ENCODE measurements at regions of chr10 and their contacts with region 1.

Region 1: DNA sequence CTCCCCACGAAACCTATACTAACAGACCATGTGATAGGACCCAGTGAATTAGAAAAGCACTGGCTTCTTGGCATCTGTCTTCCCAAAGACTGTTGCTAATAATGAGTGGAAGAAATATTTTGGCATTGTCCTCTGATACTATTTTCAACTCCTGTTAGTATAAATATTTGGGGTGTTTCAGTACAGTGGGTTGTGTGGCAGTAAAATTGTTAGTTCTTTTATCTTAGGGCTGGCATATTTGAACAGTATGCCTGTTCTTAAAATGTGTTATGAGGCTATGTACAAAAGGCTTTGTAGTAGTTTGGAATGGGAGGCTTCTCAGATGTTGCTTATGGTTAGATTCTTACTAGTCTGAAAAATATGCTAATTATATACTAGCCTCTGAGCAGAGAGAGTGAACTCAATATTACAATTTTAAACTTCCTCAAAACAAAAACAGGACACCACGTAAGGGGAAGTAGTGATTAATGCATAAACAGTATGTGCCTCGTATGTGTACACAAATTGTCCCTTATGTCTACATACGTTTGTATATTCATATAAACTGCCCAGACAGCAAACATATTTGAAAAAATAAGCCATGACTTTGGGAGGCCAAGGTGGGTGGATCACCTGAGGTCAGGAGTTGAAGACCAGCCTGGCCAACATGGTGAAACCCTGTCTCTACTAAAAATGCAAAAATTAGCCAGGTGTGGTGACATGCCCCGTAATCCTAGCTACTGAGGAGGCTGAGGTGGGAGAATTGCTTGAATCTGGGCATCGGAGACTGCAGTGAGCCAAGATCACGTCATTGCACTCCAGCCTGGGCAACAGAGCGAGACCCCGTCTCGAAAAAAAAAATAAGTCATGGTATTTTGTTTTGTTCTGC is 115.4 kb downstream of the ARID5B start:
- DNase-seq: no peak
- ATAC-seq: peak; percentile 82
- H3K4me3 ChIP-seq: no peak overlapping the region
- H3K4me3 Mint-ChIP-seq: no peak overlapping the region
- H3K27ac ChIP-seq: no peak overlapping the region
- H3K27ac Mint-ChIP-seq: peak overlapping the region in 4 of 9 donors; percentile 19 to 66 (median 48)
- H3K4me1 ChIP-seq: no peaks in the 10 kb centered on the region
- H3K4me1 Mint-ChIP-seq: peaks cover 14 to 53% (median 41%) of the 10 kb centered on the region in 7 donors
- H3K27me3 ChIP-seq: no peaks in the 10 kb centered on the region
- H3K27me3 Mint-ChIP-seq: no peaks in the 10 kb centered on the region

Region 2: GRCh38 chr10:62001898-62002297 is 15.0 kb before region 1 on chr10:
- CTCF ChIA-PET with region 1: no interaction called
- POLR2A ChIA-PET with region 1: no interaction called
- intact Hi-C with region 1: loop called in 1 of 2 experiments (anchors 2 kb)
- DNase-seq: no peak
- ATAC-seq: no peak
- H3K4me3 ChIP-seq: no peak overlapping the region
- H3K4me3 Mint-ChIP-seq: peak overlapping the region in 1 of 10 donors; percentile 52
- H3K27ac ChIP-seq: no peak overlapping the region
- H3K27ac Mint-ChIP-seq: peak overlapping the region in 3 of 9 donors; percentile 10 to 53 (median 15)
- H3K4me1 ChIP-seq: no peaks in the 10 kb centered on the region
- H3K4me1 Mint-ChIP-seq: peaks cover 24 to 72% (median 51%) of the 10 kb centered on the region in 7 donors
- H3K27me3 ChIP-seq: no peaks in the 10 kb centered on the region
- H3K27me3 Mint-ChIP-seq: no peaks in the 10 kb centered on the region

Region 3: DNA sequence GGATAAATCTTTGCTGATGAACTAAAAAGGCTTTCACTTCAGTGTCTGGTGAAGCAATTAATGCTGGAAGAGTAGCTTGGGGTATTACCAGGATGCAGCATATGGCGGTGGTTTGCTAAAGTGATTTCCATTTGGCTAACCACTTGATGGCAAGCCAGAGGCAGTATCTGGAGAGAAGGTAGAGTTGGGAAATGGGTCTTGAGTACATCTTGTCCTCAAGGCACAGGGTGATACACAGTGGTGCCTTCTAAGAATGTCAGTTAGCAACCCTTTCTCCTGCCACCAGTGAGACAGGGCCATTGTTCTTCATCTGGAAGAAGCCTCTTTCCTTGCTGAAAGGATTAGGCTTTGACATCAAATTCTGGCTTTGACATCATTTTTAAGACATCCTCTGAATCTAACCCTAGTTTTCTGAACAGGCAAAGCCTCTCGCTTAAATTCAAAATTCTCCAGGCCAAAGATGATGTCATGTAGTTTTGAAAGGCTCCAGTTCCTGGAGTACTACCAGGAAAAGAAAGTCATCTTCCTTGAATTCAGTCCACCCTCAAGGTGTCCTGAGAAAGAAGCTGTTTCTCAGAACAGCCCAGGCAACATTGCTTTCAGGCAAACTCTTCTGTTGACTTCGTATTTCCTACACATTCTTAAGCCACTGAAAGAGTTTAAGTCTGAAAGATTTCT is 47.1 kb after region 1 on chr10:
- CTCF ChIA-PET with region 1: no interaction called
- POLR2A ChIA-PET with region 1: no interaction called
- intact Hi-C with region 1: no loop called
- DNase-seq: no peak
- ATAC-seq: no peak
- H3K4me3 ChIP-seq: no peak overlapping the region
- H3K4me3 Mint-ChIP-seq: peak overlapping the region in 4 of 10 donors; percentile 5 to 74 (median 51)
- H3K27ac ChIP-seq: peak overlapping the region; percentile 3
- H3K27ac Mint-ChIP-seq: peak overlapping the region in 8 of 9 donors; percentile 39 to 91 (median 60)
- H3K4me1 ChIP-seq: peaks cover 3 to 21% of the 10 kb centered on the region in 2 donors
- H3K4me1 Mint-ChIP-seq: peaks cover 19 to 88% (median 54%) of the 10 kb centered on the region in 7 donors
- H3K27me3 ChIP-seq: no peaks in the 10 kb centered on the region
- H3K27me3 Mint-ChIP-seq: no peaks in the 10 kb centered on the region